ENCODE measurements at regions of chr19 and their contacts with region 1.

Region 1: DNA sequence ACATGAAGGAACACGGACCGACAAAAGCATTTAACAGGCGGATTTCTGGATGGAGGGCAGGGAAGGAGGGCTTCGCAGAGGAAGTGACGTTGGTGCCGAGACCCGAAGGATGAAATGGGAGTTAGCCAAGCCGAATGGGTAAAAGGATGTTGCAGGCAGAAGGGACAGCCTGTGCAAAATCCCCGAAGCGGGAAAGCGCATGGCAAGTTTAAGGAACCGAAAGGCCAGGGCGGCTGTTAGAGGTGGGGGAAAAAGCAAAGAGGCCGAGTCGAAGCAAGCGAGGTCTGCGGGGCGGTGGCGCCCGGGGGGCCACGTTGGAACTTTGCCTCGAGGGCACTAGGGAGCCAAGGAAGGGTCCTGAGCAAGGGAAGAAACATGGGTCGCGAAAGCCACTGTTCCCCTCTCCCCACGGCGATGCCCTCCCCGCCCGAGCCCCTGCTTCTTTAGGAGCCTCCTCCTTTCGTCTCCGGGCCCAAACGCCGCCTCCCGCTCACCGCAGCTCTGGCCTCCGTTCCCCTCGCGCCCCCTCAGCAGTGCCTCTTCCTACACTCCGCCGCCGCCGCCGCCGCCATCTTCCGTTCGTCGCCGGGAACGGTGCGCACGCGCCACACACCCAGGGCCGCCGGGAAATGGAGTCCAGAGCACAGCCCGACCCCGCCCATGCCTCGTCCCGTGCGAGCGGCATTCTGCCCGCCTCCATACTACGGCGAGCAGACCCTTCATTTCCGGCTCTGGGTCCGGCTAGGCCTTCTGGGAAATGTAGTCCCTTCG is at the start of gene SYMPK:
- DNase-seq: peak; percentile 99
- H3K4me3 Mint-ChIP-seq: peak within 1 kb of the TSS; percentile 93
- H3K27ac Mint-ChIP-seq: peak within 1 kb of the TSS; percentile 95
- H3K4me1 Mint-ChIP-seq: peaks cover 34% of the 10 kb centered on the region
- H3K27me3 Mint-ChIP-seq: peaks cover 29% of the 10 kb centered on the region
- total RNA-seq, gene SYMPK: 91.0 to 98.0 TPM

Region 2: DNA sequence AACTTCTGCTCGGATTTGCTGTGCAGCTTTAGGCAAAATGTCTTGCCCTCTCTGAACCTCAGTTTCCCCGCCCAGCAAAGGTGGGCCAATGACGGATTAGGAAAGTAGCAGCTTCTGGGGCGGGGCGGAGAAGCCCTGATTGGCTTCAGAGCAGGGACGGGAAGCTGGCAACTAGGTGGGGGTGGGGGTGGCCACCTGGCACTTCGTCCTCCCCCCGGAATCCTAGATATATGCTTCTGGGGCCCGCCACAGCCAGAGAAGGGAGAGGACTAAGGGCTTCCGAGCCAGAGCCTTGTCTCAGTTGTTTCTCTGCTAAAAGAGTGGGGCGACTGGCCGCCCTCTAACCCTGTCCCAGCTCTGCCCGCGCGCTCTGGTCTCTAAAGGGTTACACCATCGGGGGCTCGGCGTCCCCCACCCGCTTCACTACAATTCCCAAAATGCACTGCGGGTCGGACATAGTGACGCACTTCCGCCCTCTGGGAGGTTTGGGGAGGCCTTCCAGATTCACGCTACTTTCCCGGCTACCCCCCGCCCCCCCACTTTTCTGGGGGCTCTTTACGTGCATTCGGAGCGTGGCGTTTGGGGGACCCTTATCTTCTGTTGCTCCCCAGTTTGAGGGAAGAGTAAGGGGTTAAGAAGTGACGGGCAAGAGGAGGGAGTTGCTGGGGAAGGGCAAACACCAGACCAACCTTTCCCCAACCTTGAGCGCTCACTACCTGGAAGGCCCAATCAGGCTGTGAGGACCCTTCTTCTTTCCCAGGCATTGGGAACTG is 23.9 kb after region 1 on chr19:
- CTCF ChIA-PET with region 1: interaction called, 58 read pairs
- POLR2A ChIA-PET with region 1: interaction called, 3 read pairs
- DNase-seq: peak; percentile 97
- H3K4me3 Mint-ChIP-seq: peak overlapping the region; percentile 95
- H3K27ac Mint-ChIP-seq: peak overlapping the region; percentile 98
- H3K4me1 Mint-ChIP-seq: peaks cover 28% of the 10 kb centered on the region
- H3K27me3 Mint-ChIP-seq: no peaks in the 10 kb centered on the region

Measured in activated CD4-positive, alpha-beta T cell treated with anti-CD3 and anti-CD28 coated beads, Interleukin-2, amount 10 ng/mL, durations not matched to agents 7 days and 5 days (primary cell).